ENCODE measurements at regions of chr10 and their contacts with region 1.

Region 1: DNA sequence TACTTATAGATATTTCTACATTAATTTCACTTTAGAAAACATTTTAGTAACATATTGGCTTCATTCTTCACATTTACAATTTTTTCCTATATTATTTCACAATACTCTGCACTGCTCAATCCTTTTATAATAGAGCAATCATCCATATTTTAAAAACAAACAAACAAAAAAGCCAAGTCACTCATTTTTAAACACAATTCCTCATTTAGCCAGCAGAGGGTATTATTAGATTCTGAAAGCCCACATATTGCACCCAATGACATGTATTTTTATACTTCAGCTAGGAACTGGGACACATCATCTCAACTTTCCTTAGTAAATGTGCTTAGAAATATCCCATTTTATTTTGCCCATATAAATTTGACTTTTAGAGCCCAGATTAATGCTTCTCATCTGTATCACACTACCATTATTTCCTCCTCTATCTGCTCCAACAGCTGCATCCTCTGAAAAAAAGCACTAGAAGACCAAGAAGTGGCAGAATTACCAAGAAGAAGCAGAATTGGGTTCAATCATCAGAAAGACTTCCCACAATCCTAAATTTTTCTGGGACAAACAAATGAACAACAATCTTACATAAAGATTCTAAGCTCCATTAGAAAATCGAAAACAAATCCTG is 29.5 kb downstream of the CTNNA3 start:
- DNase-seq: no peak
- H3K4me3 Mint-ChIP-seq: no peak overlapping the region
- H3K27ac Mint-ChIP-seq: no peak overlapping the region
- H3K4me1 Mint-ChIP-seq: no peaks in the 10 kb centered on the region
- H3K27me3 Mint-ChIP-seq: no peaks in the 10 kb centered on the region

Region 2: GRCh38 chr10:67520924-67521520 is 145.5 kb before region 1 on chr10:
- CTCF ChIA-PET with region 1: no interaction called
- POLR2A ChIA-PET with region 1: no interaction called
- DNase-seq: peak; percentile 29
- H3K4me3 Mint-ChIP-seq: no peak overlapping the region
- H3K27ac Mint-ChIP-seq: no peak overlapping the region
- H3K4me1 Mint-ChIP-seq: peaks cover 2% of the 10 kb centered on the region
- H3K27me3 Mint-ChIP-seq: peaks cover 1% of the 10 kb centered on the region

Region 3: DNA sequence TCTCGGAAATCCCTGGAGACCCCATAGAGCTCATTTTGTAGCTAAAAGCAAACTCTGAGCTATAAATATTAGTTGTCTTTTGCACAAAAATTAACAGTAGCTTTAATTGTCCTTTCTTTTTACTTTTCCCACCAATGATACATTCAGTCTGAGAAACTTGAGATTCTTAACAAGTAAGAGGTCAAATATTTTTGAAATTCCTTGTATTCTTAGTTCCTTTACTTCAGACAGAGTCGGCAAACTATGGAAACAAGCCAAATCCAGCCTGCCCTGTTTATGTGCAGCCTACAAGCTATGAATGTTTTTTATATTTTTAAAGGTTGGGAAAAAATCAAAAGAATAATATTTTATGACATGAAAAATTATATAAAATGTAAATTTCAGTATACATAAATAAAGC is 117.1 kb before region 1 on chr10:
- CTCF ChIA-PET with region 1: no interaction called
- POLR2A ChIA-PET with region 1: no interaction called
- DNase-seq: no peak
- H3K4me3 Mint-ChIP-seq: no peak overlapping the region
- H3K27ac Mint-ChIP-seq: no peak overlapping the region
- H3K4me1 Mint-ChIP-seq: no peaks in the 10 kb centered on the region
- H3K27me3 Mint-ChIP-seq: peaks cover 2% of the 10 kb centered on the region

Region 4: GRCh38 chr10:67779465-67780203 is 113.1 kb after region 1 on chr10:
- CTCF ChIA-PET with region 1: interaction called, 69 read pairs
- POLR2A ChIA-PET with region 1: no interaction called
- DNase-seq: peak; percentile 73
- H3K4me3 Mint-ChIP-seq: no peak overlapping the region
- H3K27ac Mint-ChIP-seq: no peak overlapping the region
- H3K4me1 Mint-ChIP-seq: peaks cover 35% of the 10 kb centered on the region
- H3K27me3 Mint-ChIP-seq: no peaks in the 10 kb centered on the region